Naive thymus-derived CD4-positive, alpha-beta T cell (primary cell): ENCODE measurements at regions of chr3 and their contacts with region 1.

Region 1: GRCh38 chr3:192816351-192816750 is 89.0 kb upstream of the FGF12 start:
- DNase-seq: peak in 5 of 9 donors; percentile 13 to 38 (median 24)
- ATAC-seq: no peak
- H3K4me3 ChIP-seq: no peak overlapping the region
- H3K4me3 Mint-ChIP-seq: no peak overlapping the region
- H3K27ac ChIP-seq: no peak overlapping the region
- H3K27ac Mint-ChIP-seq: peak overlapping the region in 1 of 9 donors; percentile 9
- H3K4me1 ChIP-seq: no peaks in the 10 kb centered on the region
- H3K4me1 Mint-ChIP-seq: peaks cover 0 to 67% (median 4%) of the 10 kb centered on the region in 7 donors
- H3K27me3 ChIP-seq: no peaks in the 10 kb centered on the region
- H3K27me3 Mint-ChIP-seq: peaks cover 0 to 2% (median 0%) of the 10 kb centered on the region in 5 donors

Region 2: GRCh38 chr3:192802957-192803899 is 13.1 kb before region 1 on chr3:
- CTCF ChIA-PET with region 1: interaction called, 6 read pairs
- POLR2A ChIA-PET with region 1: no interaction called
- intact Hi-C with region 1: loop called in 1 of 2 experiments (anchors 1 kb)
- DNase-seq: peak in 1 of 9 donors; percentile 7
- ATAC-seq: no peak
- H3K4me3 ChIP-seq: no peak overlapping the region
- H3K4me3 Mint-ChIP-seq: no peak overlapping the region
- H3K27ac ChIP-seq: no peak overlapping the region
- H3K27ac Mint-ChIP-seq: no peak overlapping the region
- H3K4me1 ChIP-seq: no peaks in the 10 kb centered on the region
- H3K4me1 Mint-ChIP-seq: peaks cover 0 to 13% (median 0%) of the 10 kb centered on the region in 7 donors
- H3K27me3 ChIP-seq: no peaks in the 10 kb centered on the region
- H3K27me3 Mint-ChIP-seq: no peaks in the 10 kb centered on the region

Region 3: DNA sequence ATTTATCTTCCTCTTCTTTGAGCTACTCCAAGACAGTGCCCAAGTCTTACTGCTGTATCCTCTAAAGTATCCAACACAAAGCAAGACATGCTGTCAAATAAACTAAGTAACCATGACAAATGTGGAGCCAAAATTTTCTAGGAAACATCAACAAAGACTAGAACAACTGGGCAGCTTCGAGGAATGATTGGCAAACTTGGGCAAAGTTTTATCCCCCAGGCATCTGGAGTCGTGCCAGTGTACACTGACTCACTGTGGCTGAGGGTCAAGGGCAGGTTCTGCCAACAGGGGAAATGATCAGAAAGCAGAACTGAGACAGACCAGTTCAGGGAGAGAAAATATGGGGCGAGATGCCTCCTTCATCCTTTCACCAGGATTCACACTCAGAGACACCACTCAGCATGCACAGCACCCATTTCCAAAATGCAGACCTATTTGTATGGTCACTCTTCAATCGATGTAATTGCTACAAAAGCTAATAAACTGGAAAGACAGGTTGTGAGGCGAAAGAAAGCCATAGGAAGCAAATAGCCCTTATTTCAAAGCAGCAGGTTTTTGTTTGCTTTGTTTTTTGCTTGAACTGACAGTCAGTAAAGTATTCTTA is 35.6 kb after region 1 on chr3:
- CTCF ChIA-PET with region 1: no interaction called
- POLR2A ChIA-PET with region 1: no interaction called
- intact Hi-C with region 1: loop called in 1 of 2 experiments (anchors 5 kb)
- DNase-seq: no peak
- ATAC-seq: peak; percentile 62
- H3K4me3 ChIP-seq: no peak overlapping the region
- H3K4me3 Mint-ChIP-seq: peak overlapping the region in 1 of 10 donors; percentile 12
- H3K27ac ChIP-seq: no peak overlapping the region
- H3K27ac Mint-ChIP-seq: peak overlapping the region in 1 of 9 donors; percentile 43
- H3K4me1 ChIP-seq: no peaks in the 10 kb centered on the region
- H3K4me1 Mint-ChIP-seq: peaks cover 0 to 58% (median 10%) of the 10 kb centered on the region in 7 donors
- H3K27me3 ChIP-seq: no peaks in the 10 kb centered on the region
- H3K27me3 Mint-ChIP-seq: peaks cover 0 to 4% (median 0%) of the 10 kb centered on the region in 5 donors

Region 4: DNA sequence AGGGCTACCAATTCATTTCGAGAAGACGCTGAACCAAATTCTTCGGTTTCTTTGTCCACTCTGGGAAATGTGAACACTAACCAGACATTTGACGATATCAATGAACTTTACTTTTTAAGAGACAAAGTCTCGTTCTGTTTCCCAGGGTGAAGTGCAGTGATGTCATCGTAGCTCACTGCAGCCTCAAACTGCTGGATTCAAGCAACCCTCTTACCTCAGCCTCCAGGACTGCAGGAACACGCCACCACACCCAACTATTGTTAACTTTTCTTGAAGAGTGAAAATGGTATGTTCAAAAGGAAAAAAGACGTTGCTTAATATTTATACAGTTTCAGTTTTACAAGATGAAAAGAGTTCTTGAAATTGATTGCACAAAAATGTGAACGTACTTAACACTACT is 70.7 kb after region 1 on chr3:
- CTCF ChIA-PET with region 1: no interaction called
- POLR2A ChIA-PET with region 1: no interaction called
- intact Hi-C with region 1: loop called in 1 of 2 experiments (anchors 1 kb)
- DNase-seq: no peak
- ATAC-seq: no peak
- H3K4me3 ChIP-seq: no peak overlapping the region
- H3K4me3 Mint-ChIP-seq: peak overlapping the region in 1 of 10 donors; percentile 57
- H3K27ac ChIP-seq: no peak overlapping the region
- H3K27ac Mint-ChIP-seq: peak overlapping the region in 1 of 9 donors; percentile 83
- H3K4me1 ChIP-seq: no peaks in the 10 kb centered on the region
- H3K4me1 Mint-ChIP-seq: peaks cover 0 to 68% (median 5%) of the 10 kb centered on the region in 7 donors
- H3K27me3 ChIP-seq: no peaks in the 10 kb centered on the region
- H3K27me3 Mint-ChIP-seq: peaks cover 0 to 3% (median 0%) of the 10 kb centered on the region in 5 donors

Region 5: GRCh38 chr3:192899540-192899982 is 83.2 kb after region 1 on chr3:
- CTCF ChIA-PET with region 1: no interaction called
- POLR2A ChIA-PET with region 1: no interaction called
- intact Hi-C with region 1: loop called in 1 of 2 experiments (anchors 1 kb)
- DNase-seq: no peak
- ATAC-seq: no peak
- H3K4me3 ChIP-seq: no peak overlapping the region
- H3K4me3 Mint-ChIP-seq: peak overlapping the region in 5 of 10 donors; percentile 7 to 67 (median 37)
- H3K27ac ChIP-seq: peak overlapping the region; percentile 43
- H3K27ac Mint-ChIP-seq: peak overlapping the region in 5 of 9 donors; percentile 27 to 92 (median 81)
- H3K4me1 ChIP-seq: peaks cover 4 to 30% of the 10 kb centered on the region in 2 donors
- H3K4me1 Mint-ChIP-seq: peaks cover 4 to 77% (median 49%) of the 10 kb centered on the region in 7 donors
- H3K27me3 ChIP-seq: no peaks in the 10 kb centered on the region
- H3K27me3 Mint-ChIP-seq: peaks cover 0 to 14% (median 3%) of the 10 kb centered on the region in 5 donors

Region 6: GRCh38 chr3:193040836-193041672 is 224.7 kb after region 1 on chr3:
- CTCF ChIA-PET with region 1: interaction called, 28 read pairs
- POLR2A ChIA-PET with region 1: interaction called, 4 read pairs
- intact Hi-C with region 1: loop called in 1 of 2 experiments (anchors 1 kb)
- DNase-seq: peak in 7 of 9 donors; percentile 13 to 50 (median 30)
- ATAC-seq: peak; percentile 26
- H3K4me3 ChIP-seq: no peak overlapping the region
- H3K4me3 Mint-ChIP-seq: no peak overlapping the region
- H3K27ac ChIP-seq: no peak overlapping the region
- H3K27ac Mint-ChIP-seq: no peak overlapping the region
- H3K4me1 ChIP-seq: no peaks in the 10 kb centered on the region
- H3K4me1 Mint-ChIP-seq: peaks cover 0 to 9% (median 0%) of the 10 kb centered on the region in 7 donors
- H3K27me3 ChIP-seq: no peaks in the 10 kb centered on the region
- H3K27me3 Mint-ChIP-seq: peaks cover 0 to 9% (median 0%) of the 10 kb centered on the region in 5 donors